HepG2 (cell line): ENCODE measurements at regions of chr4 and their contacts with region 1.

Region 1: GRCh38 chr4:61462451-61463326 is 262.6 kb downstream of the ADGRL3 start:
- DNase-seq: peak; percentile 84
- ATAC-seq: peak; percentile 84
- H3K4me3 ChIP-seq: no peak overlapping the region
- H3K27ac ChIP-seq: no peak overlapping the region
- H3K4me1 ChIP-seq: peaks cover 14% of the 10 kb centered on the region
- H3K27me3 ChIP-seq: no peaks in the 10 kb centered on the region
- CTCF ChIP-seq: no peak
- EP300 ChIP-seq: peak in 1 of 2 experiments; percentile 76; a peak in 2 of 4 replicates
- POLR2A ChIP-seq: no peak
- RAD21 ChIP-seq: no peak

Region 2: DNA sequence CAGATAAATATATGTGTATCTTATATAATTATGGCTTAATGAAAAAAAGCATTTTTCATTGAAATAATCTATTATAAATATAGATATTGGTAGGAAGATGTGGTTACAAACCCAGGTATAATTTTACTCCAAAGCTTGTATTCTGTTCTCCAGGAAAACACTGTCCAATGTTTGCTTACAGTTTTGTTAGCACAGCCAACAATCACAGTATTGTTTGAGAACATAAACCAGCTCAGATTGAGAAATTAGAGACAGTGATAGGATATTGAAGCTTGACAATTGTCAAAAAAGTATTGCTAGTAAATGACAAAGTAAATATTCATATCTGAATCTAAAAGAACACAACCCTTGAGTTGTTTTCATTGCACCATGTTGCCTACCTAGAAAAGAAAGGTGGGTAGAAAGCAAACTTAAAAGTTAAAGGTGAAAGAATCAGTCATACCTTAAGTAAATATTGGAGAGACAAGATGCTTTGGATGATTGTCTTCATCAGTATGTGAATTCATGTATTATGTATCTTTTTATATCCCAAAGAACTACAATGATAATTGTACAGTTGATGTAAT is 33.7 kb before region 1 on chr4:
- CTCF ChIA-PET with region 1: no interaction called
- POLR2A ChIA-PET with region 1: no interaction called
- in situ Hi-C with region 1: no loop called
- intact Hi-C with region 1: loop called (anchors 1 kb)
- DNase-seq: no peak
- ATAC-seq: no peak
- H3K4me3 ChIP-seq: no peak overlapping the region
- H3K27ac ChIP-seq: no peak overlapping the region
- H3K4me1 ChIP-seq: no peaks in the 10 kb centered on the region
- H3K27me3 ChIP-seq: no peaks in the 10 kb centered on the region
- CTCF ChIP-seq: no peak
- EP300 ChIP-seq: no peak
- POLR2A ChIP-seq: no peak
- RAD21 ChIP-seq: no peak